Right ventricle myocardium superior (tissue), 1 donor: ENCODE measurements at regions of chr10 and their contacts with region 1.

Region 1: DNA sequence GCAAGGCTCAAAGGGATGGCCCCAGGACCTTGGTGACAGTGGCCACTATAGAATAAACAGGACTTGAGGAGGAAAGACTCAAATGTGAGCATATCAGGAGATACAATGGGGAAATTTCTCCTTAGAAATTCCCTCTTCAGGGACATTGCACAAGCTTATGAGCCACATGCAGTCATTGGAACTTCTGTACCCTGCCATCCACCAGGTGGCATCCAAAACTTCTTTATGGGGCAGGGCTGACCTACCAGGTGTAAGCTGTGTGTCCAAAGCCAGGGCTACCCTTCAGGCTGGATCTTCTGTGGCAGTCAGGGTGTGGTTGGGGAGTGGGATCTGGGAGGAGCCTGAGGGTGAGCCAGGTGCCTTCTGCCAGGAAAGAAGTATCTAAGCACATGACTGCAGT is 36.6 kb upstream of the LRRC18 start:
- DNase-seq: no peak
- ATAC-seq: peak; percentile 87

Region 2: DNA sequence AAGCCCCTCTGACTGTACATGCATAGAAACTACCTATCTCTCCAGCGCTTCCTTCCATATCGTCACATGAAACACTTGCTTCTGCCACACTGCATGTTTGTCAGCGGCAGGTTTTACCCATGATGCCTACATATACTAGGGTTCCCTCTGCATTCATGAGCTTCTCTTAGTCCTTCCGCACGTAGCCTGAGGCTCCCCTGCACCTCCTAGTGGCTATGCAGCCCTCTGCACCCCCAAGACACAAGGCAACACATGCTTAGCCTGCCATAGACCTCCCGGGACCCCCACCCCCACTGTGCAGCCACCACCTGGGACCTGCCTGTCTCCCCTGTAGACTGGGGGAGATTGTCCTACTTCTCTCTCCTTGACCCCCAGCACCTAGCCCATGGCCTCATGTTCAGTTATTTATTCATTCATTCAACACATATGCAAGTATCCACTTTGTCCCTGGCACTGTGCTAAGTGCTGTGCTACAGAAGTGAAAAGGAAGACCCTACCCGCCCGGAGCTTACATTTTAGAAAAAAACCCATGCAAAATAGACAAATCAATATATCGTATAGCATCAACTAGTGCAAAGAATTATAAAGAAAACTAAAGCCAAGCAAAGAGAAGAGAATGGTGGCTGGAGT is 188.5 kb after region 1 on chr10:
- intact Hi-C with region 1: loop called (anchors 5 kb)
- DNase-seq: peak; percentile 70
- ATAC-seq: peak; percentile 79

Region 3: DNA sequence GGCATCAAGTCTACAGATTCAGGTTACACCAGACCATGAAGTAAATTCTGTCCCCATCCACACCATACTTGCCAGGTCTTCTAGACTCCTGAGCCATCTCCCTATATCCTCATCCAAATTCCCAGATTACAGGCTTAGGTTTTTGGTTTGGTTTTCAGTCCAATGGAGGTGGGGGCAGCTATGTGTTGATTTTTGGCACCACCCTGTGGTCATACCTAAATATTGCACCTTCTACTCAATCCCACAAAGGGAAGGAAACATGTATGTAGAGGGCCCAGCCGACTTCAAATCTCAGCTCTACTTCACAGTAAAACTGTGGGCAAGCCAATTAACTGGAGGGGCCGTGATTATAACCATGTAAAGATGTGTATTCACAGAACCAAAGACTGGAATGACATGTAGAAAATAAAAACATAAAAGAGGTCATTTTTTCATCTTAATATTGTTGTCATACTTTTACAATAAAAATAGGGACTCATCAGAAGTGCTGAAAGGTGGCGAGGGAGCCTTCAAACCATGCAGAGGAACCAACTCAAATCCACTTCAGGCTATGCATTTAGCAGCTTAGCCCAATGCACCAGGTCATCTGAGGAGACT is 542.9 kb after region 1 on chr10:
- intact Hi-C with region 1: loop called (anchors 5 kb)
- DNase-seq: no peak
- ATAC-seq: peak; percentile 84